Left cardiac atrium (tissue), 4 donors: ENCODE measurements at regions of chr1 and their contacts with region 1.

Region 1: GRCh38 chr1:61641578-61642336 is 83.2 kb downstream of the TM2D1 start:
- DNase-seq: peak; percentile 86
- ATAC-seq: peak; percentile 91 to 92

Region 2: DNA sequence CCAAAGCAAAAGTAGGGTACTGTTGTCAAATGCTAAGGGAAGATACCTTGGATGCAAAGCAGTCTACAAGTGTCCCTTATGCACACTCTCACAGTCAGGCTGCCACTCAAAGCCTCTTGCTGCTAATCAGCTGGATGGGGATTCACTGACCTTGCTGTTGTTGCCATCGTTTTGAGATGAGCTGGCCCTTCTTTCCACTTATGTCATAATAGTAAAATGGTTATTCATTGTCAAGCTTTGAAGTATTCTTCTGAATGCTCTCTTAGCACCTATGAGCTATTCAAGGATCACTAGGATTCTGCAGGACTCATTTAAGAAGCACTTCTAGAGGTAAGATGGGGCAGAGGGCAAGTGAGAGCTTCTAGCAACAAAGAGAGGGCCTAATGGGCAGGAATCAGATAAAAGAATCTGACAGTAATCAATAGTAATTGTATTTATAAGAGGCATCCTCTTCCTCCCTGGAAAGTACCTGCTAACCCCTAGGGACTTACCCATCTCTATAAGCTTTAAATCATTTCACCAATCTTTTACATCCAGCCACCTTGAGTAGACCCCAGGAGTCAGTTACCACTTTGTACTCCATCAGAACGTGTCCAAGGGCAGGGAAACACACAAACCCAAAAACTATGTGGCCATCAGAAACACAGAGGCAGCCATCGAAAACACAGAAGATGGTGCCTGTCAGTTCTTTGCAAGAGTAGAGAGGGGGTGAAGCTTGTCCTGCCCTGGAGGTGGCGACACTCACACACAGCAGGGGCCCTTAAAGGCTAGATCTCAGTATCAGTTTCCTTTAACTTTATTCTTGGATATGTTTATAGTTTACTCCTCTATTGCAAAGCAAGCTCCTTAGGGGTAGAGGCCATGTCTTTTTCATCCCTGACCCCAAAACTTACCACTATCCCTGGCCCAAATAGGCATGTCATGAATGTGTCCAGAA is 663.1 kb before region 1 on chr1:
- intact Hi-C with region 1: loop called (anchors 10 kb)
- DNase-seq: no peak
- ATAC-seq: peak; percentile 60 to 72

Region 3: GRCh38 chr1:61481313-61481712 is 160.4 kb before region 1 on chr1:
- intact Hi-C with region 1: loop called in 1 of 2 experiments (anchors 10 kb)
- DNase-seq: no peak
- ATAC-seq: no peak

Region 4: DNA sequence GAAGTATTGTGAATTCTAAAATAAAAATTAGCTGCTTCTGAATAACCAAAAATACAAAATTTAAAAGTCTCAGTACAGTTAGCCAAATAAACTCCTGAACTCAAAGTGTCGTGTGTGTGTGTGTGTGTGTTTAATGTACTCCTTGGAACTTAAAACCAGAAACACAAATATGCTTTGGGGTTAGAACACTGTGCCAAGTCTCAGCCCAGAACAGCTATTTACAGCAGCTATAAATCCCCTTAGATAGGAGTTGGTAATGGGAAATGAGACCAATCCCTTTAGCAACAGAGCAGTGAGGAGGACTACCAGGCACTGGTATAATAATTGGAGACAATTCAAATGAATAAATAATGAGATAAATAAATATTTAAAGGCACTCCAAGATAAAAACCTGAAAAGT is 183.6 kb after region 1 on chr1:
- intact Hi-C with region 1: no loop called
- DNase-seq: no peak
- ATAC-seq: no peak